ENCODE measurements at regions of chr9 and their contacts with region 1.

Region 1: GRCh38 chr9:79145446-79145845 is 426.3 kb upstream of the TLE4 start:
- DNase-seq: no peak

Region 2: DNA sequence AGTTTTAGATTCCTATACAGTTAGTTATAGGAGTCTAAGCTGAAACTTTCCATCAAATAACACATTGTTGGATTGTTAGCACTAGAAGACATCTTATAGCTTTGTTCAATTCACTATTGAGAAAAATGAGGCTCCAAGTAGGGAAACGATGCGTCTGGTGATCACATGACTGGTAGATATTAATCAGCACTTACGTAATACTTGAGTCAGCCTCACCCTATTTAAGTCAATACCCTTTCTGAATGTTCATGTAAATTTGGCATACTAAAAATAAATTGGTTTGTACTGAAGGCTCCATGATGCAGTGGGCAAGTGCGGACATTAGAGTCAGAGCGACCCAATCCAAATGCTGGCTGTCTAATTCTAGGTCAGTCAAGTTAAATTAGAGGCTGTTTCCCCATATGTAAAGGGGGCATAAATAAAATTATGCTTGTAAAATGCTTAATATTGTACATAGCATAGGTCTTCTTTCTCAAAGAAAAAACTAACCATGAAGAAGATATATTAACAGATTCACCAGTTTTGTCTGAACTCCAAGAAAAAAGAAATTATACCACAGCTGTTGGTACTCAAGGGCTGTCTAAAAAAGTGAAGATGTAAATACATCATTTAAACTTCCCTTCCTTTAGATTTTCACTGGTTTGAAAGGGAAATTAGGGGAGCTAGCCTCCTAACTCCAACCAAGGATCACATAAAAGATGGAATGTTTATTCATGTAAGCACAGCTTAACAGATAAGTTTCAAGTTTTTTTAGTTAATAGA is 19.8 kb after region 1 on chr9:
- intact Hi-C with region 1: loop called in 1 of 2 experiments (anchors 1 kb)
- DNase-seq: no peak

Measured in posterior vena cava (tissue), 2 donors.